ENCODE measurements at regions of chr3 and their contacts with region 1.

Region 1: DNA sequence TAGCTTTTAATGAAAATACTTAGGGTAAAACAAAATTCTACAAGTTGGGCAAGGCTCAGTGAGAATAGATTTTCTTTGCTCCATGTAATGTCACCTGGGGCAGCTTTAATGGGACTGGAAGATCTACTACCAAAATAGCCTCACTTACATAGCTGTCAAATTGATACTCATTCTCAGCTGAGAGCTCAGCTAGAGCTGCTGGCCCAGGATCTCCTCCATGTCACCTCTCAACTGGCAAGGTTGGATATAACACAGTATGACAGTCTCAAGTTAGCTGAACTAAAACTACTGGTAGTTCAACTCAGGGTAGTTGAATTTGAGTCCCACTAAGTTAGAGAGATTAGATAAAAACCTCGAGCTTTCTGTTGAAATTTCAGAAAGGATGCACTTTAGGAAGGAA is 218.5 kb upstream of the PLSCR5 start:
- DNase-seq: no peak
- H3K4me3 ChIP-seq: no peak overlapping the region
- H3K27ac ChIP-seq: no peak overlapping the region
- H3K4me1 ChIP-seq: no peaks in the 10 kb centered on the region
- H3K27me3 ChIP-seq: no peaks in the 10 kb centered on the region
- CTCF ChIP-seq: no peak
- POLR2A ChIP-seq: no peak

Region 2: DNA sequence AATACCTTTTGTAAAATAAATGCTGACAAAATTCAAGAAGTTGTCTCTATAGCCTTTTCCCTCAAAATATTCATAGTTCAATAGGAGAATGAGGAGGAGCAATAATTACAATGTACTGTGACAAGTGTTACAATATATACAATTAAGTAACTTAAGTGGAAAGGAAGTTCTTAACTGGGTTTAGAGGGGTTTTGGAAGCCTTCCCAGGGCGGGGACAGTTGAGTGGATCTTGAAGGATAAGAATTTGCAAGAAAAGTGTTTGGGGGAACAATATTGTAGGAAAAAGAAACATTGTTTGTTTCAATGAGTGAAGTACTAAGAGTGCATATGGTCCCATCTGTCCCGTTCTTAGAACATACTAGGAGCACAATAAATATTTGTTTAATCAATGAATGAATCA is 53.3 kb before region 1 on chr3:
- intact Hi-C with region 1: no loop called
- DNase-seq: no peak
- H3K4me3 ChIP-seq: no peak overlapping the region
- H3K27ac ChIP-seq: no peak overlapping the region
- H3K4me1 ChIP-seq: no peaks in the 10 kb centered on the region
- H3K27me3 ChIP-seq: no peaks in the 10 kb centered on the region
- CTCF ChIP-seq: no peak
- POLR2A ChIP-seq: no peak

Region 3: DNA sequence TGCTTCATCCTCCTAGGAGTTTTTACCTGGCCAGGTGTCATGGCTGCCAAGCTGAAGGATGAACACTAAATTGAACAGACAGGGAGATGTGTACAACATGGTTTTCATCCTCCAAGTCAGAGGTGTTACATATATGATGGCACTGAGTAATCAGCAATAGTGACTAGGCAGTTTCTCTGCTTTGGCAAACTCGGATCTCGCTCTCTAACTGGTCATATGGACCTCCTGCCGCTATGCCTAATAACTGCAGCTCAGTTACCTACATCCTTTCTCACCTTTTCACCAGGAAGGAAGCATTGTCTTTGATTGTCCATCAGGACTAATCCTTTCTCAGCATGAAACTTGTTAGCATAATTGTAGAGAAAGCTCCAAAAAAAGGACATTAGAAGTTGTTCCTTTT is 42.6 kb before region 1 on chr3:
- intact Hi-C with region 1: loop called (anchors 2 kb)
- DNase-seq: no peak
- H3K4me3 ChIP-seq: no peak overlapping the region
- H3K27ac ChIP-seq: no peak overlapping the region
- H3K4me1 ChIP-seq: no peaks in the 10 kb centered on the region
- H3K27me3 ChIP-seq: no peaks in the 10 kb centered on the region
- CTCF ChIP-seq: no peak
- POLR2A ChIP-seq: no peak

Region 4: DNA sequence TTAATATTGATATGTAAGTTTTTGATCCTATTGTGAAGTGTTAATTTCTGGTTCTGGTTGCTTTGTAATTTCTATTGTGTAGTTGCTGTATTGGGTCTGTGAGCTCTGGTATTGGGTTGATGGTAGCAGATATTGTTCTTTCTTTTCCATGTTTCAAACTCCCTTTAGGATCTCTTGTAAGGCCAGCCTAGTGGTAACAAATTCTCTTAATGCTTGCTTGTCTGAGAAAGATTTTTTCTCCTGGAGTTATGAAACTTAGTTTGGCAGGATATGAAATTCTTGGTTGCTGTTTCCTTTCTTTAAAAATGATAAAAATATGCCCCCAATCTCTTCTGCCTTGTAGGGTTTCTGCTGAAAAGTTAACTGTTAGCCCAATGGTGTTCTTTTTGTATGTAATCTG is 50.1 kb after region 1 on chr3:
- intact Hi-C with region 1: no loop called
- DNase-seq: no peak
- H3K4me3 ChIP-seq: no peak overlapping the region
- H3K27ac ChIP-seq: no peak overlapping the region
- H3K4me1 ChIP-seq: no peaks in the 10 kb centered on the region
- H3K27me3 ChIP-seq: no peaks in the 10 kb centered on the region
- CTCF ChIP-seq: no peak
- POLR2A ChIP-seq: no peak

Measured in vagina (tissue), 2 donors.